Ascending aorta (tissue), 2 donors: ENCODE measurements at regions of chr3 and their contacts with region 1.

Region 1: GRCh38 chr3:71101014-71101413 is 482.5 kb downstream of the FOXP1 start:
- DNase-seq: no peak
- H3K4me3 ChIP-seq: no peak overlapping the region
- H3K27ac ChIP-seq: peak overlapping the region; percentile 82 to 83
- H3K4me1 ChIP-seq: peaks cover 19 to 63% of the 10 kb centered on the region in 2 donors
- H3K27me3 ChIP-seq: no peaks in the 10 kb centered on the region
- CTCF ChIP-seq: no peak

Region 2: GRCh38 chr3:71083726-71084131 is 17.3 kb before region 1 on chr3:
- intact Hi-C with region 1: no loop called
- DNase-seq: no peak
- H3K4me3 ChIP-seq: no peak overlapping the region
- H3K27ac ChIP-seq: peak overlapping the region in 1 of 2 donors; percentile 20
- H3K4me1 ChIP-seq: peaks cover 0 to 32% of the 10 kb centered on the region in 2 donors
- H3K27me3 ChIP-seq: no peaks in the 10 kb centered on the region
- CTCF ChIP-seq: no peak

Region 3: DNA sequence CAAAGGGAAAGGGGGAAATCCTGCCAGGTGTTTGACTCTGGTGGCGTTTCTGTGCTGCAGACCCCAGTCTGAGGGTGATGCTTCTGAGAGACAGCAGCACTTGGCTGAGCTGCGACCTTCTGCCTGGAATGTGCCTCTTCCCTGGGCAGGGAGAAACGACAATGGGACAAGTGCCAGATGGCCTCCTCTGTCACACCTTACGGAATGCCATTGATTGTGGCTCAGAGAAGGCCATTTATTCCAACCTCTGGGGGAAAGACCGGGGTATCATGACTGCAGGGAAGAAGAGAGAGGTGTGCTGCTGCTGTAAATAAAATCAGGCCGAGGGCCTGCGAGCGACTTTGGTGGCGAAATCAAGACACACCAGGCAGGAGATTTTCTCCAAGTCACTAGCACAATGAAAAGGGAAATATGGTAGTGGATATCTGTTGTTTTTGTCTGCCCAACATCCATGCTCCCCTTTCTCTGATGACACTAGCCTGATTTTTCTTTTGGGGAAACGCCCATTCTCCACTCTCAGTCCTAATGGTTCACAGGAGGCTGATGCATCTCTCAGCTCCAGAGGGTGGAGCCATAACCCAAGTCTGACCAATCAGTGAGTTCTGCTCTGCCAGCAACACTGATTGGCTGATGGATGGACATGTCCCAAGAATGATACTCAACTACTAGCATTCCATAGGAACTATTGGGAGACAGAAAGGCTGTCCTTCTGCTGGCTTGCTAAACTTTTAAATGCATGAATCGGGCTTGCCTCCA is 146.4 kb after region 1 on chr3:
- intact Hi-C with region 1: loop called (anchors 2 kb)
- DNase-seq: peak in 1 of 2 donors; percentile 58
- H3K4me3 ChIP-seq: no peak overlapping the region
- H3K27ac ChIP-seq: peak overlapping the region; percentile 69 to 86
- H3K4me1 ChIP-seq: peaks cover 0 to 21% of the 10 kb centered on the region in 2 donors
- H3K27me3 ChIP-seq: no peaks in the 10 kb centered on the region
- CTCF ChIP-seq: no peak